ENCODE measurements at regions of chr14 and their contacts with region 1.

Region 1: GRCh38 chr14:104768437-104769323 is 15.7 kb downstream of the SIVA1 start:
- DNase-seq: peak; percentile 88 to 96 (median 95)
- ATAC-seq: peak; percentile 97
- H3K4me3 ChIP-seq: no peak overlapping the region
- H3K4me1 ChIP-seq: no peaks in the 10 kb centered on the region
- CTCF ChIP-seq: peak; percentile 98

Region 2: GRCh38 chr14:104826189-104826860 is 57.6 kb after region 1 on chr14:
- intact Hi-C with region 1: loop called (anchors 5 to 10 kb)
- DNase-seq: peak; percentile 92 to 97 (median 96)
- ATAC-seq: peak; percentile 96
- H3K4me3 ChIP-seq: no peak overlapping the region
- H3K4me1 ChIP-seq: peaks cover 18% of the 10 kb centered on the region
- CTCF ChIP-seq: peak; percentile 80

Region 3: DNA sequence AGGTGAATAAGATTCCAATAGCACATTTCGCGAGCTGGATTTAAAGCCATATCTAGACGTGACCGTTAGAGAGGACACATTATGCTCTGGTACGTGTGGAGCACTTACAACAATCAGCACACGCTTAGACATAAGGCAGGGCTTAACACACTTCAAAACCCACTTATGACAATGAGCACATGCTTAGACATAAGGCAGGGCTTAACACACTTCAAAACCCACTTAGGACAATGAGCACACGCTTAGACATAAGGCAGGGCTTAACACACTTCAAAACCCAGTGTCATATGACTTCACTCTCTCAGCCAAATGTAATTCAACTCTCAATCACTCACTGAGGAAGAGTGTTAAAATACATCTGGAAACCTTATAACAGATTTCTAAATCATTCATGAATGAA is 144.8 kb after region 1 on chr14:
- intact Hi-C with region 1: no loop called
- DNase-seq: no peak
- ATAC-seq: no peak
- H3K4me3 ChIP-seq: no peak overlapping the region
- H3K4me1 ChIP-seq: no peaks in the 10 kb centered on the region
- CTCF ChIP-seq: no peak